Body of pancreas (tissue), 4 donors: ENCODE measurements at regions of chr22 and their contacts with region 1.

Region 1: DNA sequence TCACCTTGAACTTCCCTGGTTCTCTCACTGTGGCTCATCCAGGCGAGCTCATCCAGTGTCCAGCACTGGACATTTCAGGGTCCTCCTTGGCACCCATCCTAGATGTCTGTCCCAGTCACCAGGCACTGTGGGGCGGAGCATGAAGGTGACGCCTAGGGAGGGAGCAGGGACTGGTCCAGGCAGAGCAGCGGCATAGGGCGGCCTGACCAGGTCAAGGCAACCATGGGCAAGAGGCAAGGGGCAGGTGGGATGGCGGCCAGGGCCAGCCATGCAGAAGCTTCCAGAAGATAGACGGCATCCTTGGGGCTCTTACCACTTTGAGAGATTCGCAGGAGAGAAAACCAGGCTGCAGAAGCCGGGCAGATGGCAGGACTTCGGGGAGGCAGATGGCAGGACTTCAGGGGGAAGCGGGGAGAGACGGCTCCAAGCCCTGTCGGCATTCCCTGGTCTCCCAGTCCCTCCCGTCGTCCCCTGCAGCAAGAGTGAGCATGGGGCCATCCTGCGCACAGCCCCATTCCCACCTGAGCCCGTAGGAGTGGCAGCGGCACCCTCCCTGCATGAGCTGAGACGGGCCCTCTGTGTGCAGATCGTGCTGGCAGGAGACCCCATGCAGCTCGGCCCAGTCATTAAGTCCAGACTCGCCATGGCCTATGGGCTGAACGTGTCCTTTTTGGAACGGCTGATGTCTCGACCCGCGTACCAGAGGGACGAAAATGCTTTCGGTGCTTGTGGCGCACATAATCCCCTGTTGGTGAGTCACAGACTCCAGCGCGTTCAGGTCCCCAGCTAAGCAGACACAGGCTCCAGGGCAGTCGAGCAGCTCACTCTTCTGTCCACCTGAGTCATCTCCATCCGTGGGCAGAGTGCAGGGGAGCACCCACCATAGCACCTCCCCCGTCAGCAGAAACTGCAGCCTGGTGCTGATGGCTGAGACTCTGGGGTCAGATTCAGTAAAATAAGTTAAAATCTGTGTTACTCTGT is 20.1 kb upstream of the PANX2 start:
- DNase-seq: no peak
- ATAC-seq: no peak
- H3K4me3 ChIP-seq: no peak overlapping the region
- H3K27ac ChIP-seq: no peak overlapping the region
- H3K4me1 ChIP-seq: peaks cover 6% of the 10 kb centered on the region
- H3K27me3 ChIP-seq: no peaks in the 10 kb centered on the region
- CTCF ChIP-seq: no peak
- POLR2A ChIP-seq: no peak

Region 2: DNA sequence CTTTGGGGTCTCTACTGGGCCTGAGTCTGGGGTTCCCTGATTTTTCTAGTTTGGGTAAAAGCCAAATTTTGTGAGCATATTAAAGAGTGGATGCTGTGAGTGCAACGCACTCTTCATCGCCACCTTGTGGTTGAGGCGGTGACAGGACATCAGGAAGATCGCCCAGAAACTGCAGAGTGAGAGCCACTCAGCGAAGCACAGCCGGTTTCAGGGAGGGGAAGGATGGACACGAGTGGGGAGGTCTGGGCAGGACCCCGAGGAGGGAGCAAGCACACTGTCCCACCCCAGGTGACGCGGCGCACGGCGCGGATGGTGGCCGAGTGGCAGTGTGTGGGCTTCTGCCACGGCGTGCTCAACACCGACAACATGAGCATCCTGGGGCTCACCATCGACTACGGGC is 59.5 kb after region 1 on chr22:
- intact Hi-C with region 1: loop called (anchors 5 kb)
- DNase-seq: peak; percentile 75 to 82 (median 78)
- ATAC-seq: peak; percentile 61
- H3K4me3 ChIP-seq: no peak overlapping the region
- H3K27ac ChIP-seq: no peak overlapping the region
- H3K4me1 ChIP-seq: no peaks in the 10 kb centered on the region
- H3K27me3 ChIP-seq: no peaks in the 10 kb centered on the region
- CTCF ChIP-seq: peak; percentile 69 to 90 (median 84)
- POLR2A ChIP-seq: no peak

Region 3: DNA sequence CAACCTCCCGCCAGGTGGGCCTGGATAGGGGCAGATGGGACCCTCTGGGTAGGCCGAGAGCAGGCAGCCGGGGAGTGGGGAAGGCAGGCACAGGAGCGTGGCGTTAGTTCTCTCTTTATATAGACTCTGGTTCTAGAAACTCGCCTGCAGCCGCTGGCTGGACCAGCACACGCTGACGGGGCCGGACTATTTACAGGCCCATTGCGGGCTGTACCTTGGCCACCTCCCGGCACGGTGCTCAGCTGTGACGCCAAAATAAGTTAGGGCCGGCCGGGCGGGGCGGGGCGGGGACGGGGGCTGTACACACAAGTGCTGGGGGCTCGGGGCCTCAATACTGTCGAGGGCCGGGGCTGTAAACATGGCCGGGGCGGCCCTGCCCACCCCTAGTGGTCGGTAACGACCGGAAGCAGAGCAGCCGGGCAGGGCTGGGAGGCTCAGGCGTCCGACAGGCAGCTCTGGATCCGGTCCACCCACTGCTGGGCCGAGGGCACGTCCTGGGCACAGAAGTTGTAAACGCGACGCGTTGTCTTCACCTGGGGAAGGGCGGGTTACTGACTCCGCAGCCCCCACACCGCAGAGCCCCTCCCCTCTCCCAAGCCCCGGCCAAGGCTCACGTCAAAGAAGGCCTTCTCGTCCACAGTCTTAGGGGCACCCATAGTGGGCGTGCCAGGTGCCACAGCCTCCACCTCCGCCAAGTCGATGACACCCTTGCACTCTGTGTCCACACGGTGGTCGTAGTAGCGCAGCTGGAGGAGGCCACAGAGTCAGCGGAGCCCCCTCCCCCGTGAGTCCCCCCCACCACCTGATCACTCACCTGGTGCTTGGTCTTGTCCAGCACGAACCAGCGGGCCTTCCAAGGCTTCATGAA is 296.5 kb after region 1 on chr22:
- intact Hi-C with region 1: no loop called
- DNase-seq: no peak
- ATAC-seq: no peak
- H3K4me3 ChIP-seq: no peak overlapping the region
- H3K27ac ChIP-seq: no peak overlapping the region
- H3K4me1 ChIP-seq: no peaks in the 10 kb centered on the region
- H3K27me3 ChIP-seq: no peaks in the 10 kb centered on the region
- CTCF ChIP-seq: no peak
- POLR2A ChIP-seq: no peak